Caco-2 (cell line): ENCODE measurements at regions of chr2 and their contacts with region 1.

Region 1: DNA sequence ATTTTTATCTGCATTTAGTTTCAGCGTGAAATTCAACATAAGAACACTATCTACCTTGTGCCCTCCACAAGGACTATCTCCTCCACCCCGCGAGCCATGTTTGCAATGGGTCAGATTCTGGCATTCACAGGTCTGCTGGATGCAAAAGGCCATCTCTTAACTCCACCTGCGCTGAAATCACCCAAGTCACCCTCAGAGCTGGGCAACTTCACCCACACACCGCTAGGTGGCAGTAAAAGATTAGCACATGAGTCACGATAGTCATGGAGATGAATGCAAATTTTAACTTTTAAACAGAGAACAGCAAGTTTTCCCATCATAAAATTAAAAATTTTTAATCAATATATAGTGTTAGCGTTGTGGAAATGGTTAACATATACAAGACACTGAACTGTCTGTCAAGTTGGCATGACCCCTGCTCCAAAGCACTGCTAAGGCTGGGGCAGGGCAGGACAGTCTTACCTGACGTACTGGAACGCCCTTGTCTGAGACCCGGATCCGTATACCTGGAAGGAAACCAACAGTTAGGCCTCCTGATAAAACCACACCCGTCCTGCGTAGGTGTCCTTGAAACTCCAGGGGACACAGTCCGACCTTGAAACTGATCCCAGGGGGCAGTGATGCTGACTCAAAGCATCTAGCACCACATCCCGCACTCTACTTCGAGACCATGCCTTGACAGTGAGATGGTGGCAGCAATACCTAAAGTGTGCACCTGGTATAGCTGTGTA is 89.6 kb downstream of the UXS1 start:
- DNase-seq: peak; percentile 66 to 77
- H3K4me3 ChIP-seq: no peak overlapping the region
- H3K4me3 Mint-ChIP-seq: no peak overlapping the region
- H3K27ac Mint-ChIP-seq: no peak overlapping the region
- H3K4me1 ChIP-seq: no peaks in the 10 kb centered on the region
- H3K4me1 Mint-ChIP-seq: no peaks in the 10 kb centered on the region
- H3K27me3 ChIP-seq: no peaks in the 10 kb centered on the region
- H3K27me3 Mint-ChIP-seq: no peaks in the 10 kb centered on the region
- CTCF ChIP-seq: peak; percentile 94 to 95

Region 2: DNA sequence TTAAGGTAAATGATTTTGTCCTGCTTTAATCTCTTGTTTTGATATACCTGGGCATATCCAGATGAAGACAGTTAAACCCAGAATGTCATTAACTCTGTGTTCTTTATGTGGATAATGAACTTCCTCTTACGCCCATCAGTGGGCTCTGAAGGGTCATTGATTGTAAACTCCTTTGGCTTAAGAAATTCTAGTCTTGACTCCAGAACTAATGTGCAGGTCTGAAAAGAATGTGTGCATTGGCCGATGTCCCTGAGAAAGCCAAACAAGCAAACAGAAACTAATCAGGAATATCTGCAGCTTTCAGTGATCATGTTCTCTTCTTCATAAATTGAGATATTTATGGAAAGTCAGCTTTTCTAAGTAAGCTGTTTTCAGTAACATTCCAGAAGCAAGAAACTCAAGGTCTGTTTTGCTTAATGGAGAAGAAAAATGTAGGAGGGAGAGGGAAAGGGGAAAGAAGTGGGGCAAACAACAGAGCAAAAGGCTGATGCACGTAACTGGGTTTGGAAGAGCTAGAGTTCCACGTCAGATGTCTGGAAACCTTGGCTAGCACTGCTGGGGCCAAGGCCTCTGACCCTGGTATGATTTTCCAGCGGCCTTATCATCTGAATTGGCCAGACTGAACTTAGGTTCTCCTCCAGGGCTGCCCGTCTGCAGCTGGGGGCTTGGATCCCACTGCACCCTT is 644.3 kb before region 1 on chr2:
- CTCF ChIA-PET with region 1: no interaction called
- POLR2A ChIA-PET with region 1: no interaction called
- intact Hi-C with region 1: no loop called
- DNase-seq: no peak
- H3K4me3 ChIP-seq: no peak overlapping the region
- H3K4me3 Mint-ChIP-seq: no peak overlapping the region
- H3K27ac Mint-ChIP-seq: no peak overlapping the region
- H3K4me1 ChIP-seq: peaks cover 9% of the 10 kb centered on the region
- H3K4me1 Mint-ChIP-seq: peaks cover 9% of the 10 kb centered on the region
- H3K27me3 ChIP-seq: no peaks in the 10 kb centered on the region
- H3K27me3 Mint-ChIP-seq: no peaks in the 10 kb centered on the region
- CTCF ChIP-seq: no peak

Region 3: GRCh38 chr2:106160786-106161261 is 56.3 kb after region 1 on chr2:
- CTCF ChIA-PET with region 1: interaction called, 3 read pairs
- POLR2A ChIA-PET with region 1: no interaction called
- intact Hi-C with region 1: loop called (anchors 2 kb)
- DNase-seq: no peak
- H3K4me3 ChIP-seq: no peak overlapping the region
- H3K4me3 Mint-ChIP-seq: no peak overlapping the region
- H3K27ac Mint-ChIP-seq: peak overlapping the region; percentile 91
- H3K4me1 ChIP-seq: peaks cover 51% of the 10 kb centered on the region
- H3K4me1 Mint-ChIP-seq: peaks cover 46% of the 10 kb centered on the region
- H3K27me3 ChIP-seq: no peaks in the 10 kb centered on the region
- H3K27me3 Mint-ChIP-seq: no peaks in the 10 kb centered on the region
- CTCF ChIP-seq: no peak

Region 4: GRCh38 chr2:106193977-106194778 is 89.7 kb after region 1 on chr2 and contains the start of gene UXS1:
- CTCF ChIA-PET with region 1: interaction called, 6 read pairs
- POLR2A ChIA-PET with region 1: no interaction called
- intact Hi-C with region 1: loop called (anchors 2 kb)
- DNase-seq: peak; percentile 98
- H3K4me3 ChIP-seq: peak within 1 kb of the TSS; percentile 91
- H3K4me3 Mint-ChIP-seq: peak within 1 kb of the TSS; percentile 81
- H3K27ac Mint-ChIP-seq: peak within 1 kb of the TSS; percentile 95
- H3K4me1 ChIP-seq: peaks cover 23% of the 10 kb centered on the region
- H3K4me1 Mint-ChIP-seq: peaks cover 42% of the 10 kb centered on the region
- H3K27me3 ChIP-seq: no peaks in the 10 kb centered on the region
- H3K27me3 Mint-ChIP-seq: no peaks in the 10 kb centered on the region
- CTCF ChIP-seq: no peak
- total RNA-seq, gene UXS1: 71.5 and 72.7 TPM in 2 replicates

Region 5: DNA sequence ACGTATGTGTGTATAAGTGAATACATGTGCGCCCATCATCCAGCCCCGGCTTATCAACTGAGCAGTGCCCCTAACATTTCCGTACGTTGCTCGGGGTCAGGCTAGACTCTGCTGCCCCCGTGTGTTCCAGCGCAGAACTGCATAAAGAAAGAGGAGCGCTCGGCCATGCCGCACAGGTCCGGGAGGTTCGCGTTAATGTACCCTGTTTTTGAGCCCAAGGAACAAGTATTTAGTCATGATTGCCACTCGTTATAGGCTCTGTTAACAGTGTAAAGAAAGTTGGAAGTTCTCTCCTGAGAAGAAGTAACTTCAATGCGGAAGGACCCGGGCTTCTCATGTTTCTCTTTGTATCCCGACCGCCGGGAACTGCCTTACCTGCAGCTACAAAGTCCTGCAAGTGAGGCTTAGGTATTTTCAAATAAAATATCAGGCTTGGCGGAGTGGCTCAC is 438.3 kb after region 1 on chr2:
- CTCF ChIA-PET with region 1: interaction called, 4 read pairs
- POLR2A ChIA-PET with region 1: no interaction called
- intact Hi-C with region 1: loop called (anchors 1 kb)
- DNase-seq: peak; percentile 72 to 82
- H3K4me3 ChIP-seq: peak overlapping the region; percentile 17; the same call in 1 of the 2 replicates
- H3K4me3 Mint-ChIP-seq: peak overlapping the region; percentile 61
- H3K27ac Mint-ChIP-seq: no peak overlapping the region
- H3K4me1 ChIP-seq: no peaks in the 10 kb centered on the region
- H3K4me1 Mint-ChIP-seq: no peaks in the 10 kb centered on the region
- H3K27me3 ChIP-seq: no peaks in the 10 kb centered on the region
- H3K27me3 Mint-ChIP-seq: peaks cover 12% of the 10 kb centered on the region
- CTCF ChIP-seq: peak; percentile 92

Region 6: DNA sequence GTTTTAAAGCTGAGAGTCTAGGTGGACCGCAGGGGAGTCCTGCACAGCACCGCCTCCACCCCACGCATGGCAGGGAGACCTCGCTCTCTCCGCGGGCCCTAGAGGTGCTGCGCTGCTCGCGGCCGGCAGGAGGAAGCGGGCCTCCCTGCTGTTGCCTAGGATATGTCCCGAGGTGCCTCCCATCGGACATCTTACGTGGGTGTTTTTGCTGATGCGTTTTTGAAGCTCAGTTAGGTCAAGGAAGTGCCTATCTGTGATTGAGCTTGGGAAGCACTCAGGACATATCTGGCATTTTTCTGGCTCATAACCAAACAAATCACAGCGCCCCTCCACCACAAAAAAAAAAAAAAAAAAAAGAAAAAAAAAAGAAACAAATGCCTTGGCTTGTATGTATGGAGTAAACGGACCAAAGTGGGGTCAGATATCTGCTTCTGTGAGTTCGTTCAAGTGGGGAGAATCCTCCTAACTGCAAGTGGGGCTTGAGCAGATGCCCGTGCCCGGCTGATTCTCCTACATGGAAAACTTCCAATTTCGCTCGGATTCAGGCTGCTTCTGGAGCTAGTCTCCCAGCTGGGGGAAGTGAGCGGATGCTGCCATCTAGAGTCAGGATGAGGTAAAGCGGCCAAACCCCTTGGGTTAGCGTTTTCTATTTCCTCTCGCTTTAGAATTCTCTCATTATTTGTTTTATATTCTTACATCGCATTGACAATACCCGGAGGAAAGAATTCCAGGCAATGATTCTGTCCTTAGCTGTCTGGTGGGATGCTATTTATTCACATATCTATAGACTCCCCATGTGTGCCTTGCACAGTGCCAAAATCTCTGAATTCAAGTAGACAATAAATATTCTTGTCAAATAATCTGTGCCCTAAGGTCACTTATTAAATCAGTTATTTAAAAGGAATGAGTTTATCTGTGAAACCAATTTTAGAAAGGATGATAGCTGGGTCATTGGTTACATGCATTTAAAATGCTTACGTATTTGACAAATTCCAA is 477.9 kb after region 1 on chr2:
- CTCF ChIA-PET with region 1: interaction called, 3 read pairs
- POLR2A ChIA-PET with region 1: no interaction called
- intact Hi-C with region 1: loop called (anchors 1 kb)
- DNase-seq: peak; percentile 76 to 80
- H3K4me3 ChIP-seq: no peak overlapping the region
- H3K4me3 Mint-ChIP-seq: peak overlapping the region; percentile 55
- H3K27ac Mint-ChIP-seq: no peak overlapping the region
- H3K4me1 ChIP-seq: no peaks in the 10 kb centered on the region
- H3K4me1 Mint-ChIP-seq: peaks cover 7% of the 10 kb centered on the region
- H3K27me3 ChIP-seq: no peaks in the 10 kb centered on the region
- H3K27me3 Mint-ChIP-seq: peaks cover 11% of the 10 kb centered on the region
- CTCF ChIP-seq: peak; percentile 84 to 93